ENCODE measurements at regions of chr1 and their contacts with region 1.

Region 1: GRCh38 chr1:107804134-107804533 is 160.8 kb downstream of the VAV3 start:
- DNase-seq: peak in 6 of 9 donors; percentile 22 to 65 (median 56)
- ATAC-seq: peak; percentile 76
- H3K4me3 ChIP-seq: no peak overlapping the region
- H3K4me3 Mint-ChIP-seq: peak overlapping the region in 9 of 10 donors; percentile 46 to 81 (median 60)
- H3K27ac ChIP-seq: no peak overlapping the region
- H3K27ac Mint-ChIP-seq: peak overlapping the region in 8 of 9 donors; percentile 5 to 79 (median 49)
- H3K4me1 ChIP-seq: peaks cover 22 to 23% of the 10 kb centered on the region in 2 donors
- H3K4me1 Mint-ChIP-seq: peaks cover 27 to 55% (median 36%) of the 10 kb centered on the region in 7 donors
- H3K27me3 ChIP-seq: no peaks in the 10 kb centered on the region
- H3K27me3 Mint-ChIP-seq: peaks cover 0 to 4% (median 0%) of the 10 kb centered on the region in 5 donors

Region 2: GRCh38 chr1:107840725-107841124 is 36.6 kb after region 1 on chr1:
- CTCF ChIA-PET with region 1: no interaction called
- POLR2A ChIA-PET with region 1: no interaction called
- intact Hi-C with region 1: loop called in 1 of 2 experiments (anchors 5 kb)
- DNase-seq: no peak
- ATAC-seq: peak; percentile 50
- H3K4me3 ChIP-seq: peak overlapping the region; percentile 26
- H3K4me3 Mint-ChIP-seq: peak overlapping the region; percentile 0 to 75 (median 28)
- H3K27ac ChIP-seq: no peak overlapping the region
- H3K27ac Mint-ChIP-seq: peak overlapping the region; percentile 2 to 75 (median 25)
- H3K4me1 ChIP-seq: peaks cover 32 to 51% of the 10 kb centered on the region in 2 donors
- H3K4me1 Mint-ChIP-seq: peaks cover 38 to 87% (median 59%) of the 10 kb centered on the region in 7 donors
- H3K27me3 ChIP-seq: no peaks in the 10 kb centered on the region
- H3K27me3 Mint-ChIP-seq: no peaks in the 10 kb centered on the region

Measured in naive thymus-derived CD4-positive, alpha-beta T cell (primary cell).